ENCODE measurements at regions of chr5 and their contacts with region 1.

Region 1: DNA sequence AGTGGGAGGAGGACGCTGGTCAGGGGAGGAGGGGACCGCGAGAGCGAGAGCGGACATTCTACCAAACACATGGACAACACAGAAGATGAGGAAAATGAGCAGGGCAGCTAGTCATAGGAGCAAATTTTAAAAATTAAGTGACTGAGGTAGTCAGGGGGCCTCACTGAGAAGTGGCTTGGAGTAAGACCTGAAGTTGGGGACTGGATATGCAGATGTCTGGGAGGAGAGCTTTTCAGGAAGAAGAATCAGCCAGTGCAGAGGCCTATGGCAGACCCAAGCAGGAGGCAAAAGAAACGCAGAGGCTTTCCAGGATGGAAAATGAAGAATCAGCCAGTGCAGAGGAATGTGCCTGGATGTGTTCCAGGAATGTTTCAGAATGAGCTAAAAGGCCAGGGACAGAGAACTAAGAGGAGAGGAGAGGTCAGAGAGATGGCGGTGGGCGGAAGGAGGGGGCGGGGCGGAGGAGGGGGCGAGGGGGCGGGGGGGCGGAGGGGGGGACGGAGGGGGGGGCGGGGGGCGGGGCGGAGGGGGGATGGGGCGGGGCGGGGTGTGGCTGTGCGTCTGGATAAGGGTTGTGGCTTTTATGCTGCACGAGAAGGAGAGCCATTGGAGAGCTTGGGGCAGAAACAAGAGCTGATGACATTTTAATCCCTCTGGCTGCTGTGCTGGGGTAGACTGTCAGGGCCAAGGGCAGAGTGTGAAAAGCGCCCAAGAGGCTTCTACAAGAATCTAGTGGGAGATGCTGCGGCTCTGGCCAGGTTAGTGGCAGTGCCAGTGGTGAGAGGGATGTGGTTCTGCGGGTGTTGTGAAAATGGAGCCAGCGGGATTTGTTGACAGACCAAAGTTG is 129.6 kb downstream of the KCNIP1 start:
- DNase-seq: peak; percentile 83
- H3K4me3 ChIP-seq: peak overlapping the region; percentile 12 to 42
- H3K27ac ChIP-seq: peak overlapping the region; percentile 83 to 84
- H3K4me1 ChIP-seq: peaks cover 33% of the 10 kb centered on the region
- H3K27me3 ChIP-seq: no peaks in the 10 kb centered on the region
- CTCF ChIP-seq: no peak
- POLR2A ChIP-seq: no peak

Region 2: DNA sequence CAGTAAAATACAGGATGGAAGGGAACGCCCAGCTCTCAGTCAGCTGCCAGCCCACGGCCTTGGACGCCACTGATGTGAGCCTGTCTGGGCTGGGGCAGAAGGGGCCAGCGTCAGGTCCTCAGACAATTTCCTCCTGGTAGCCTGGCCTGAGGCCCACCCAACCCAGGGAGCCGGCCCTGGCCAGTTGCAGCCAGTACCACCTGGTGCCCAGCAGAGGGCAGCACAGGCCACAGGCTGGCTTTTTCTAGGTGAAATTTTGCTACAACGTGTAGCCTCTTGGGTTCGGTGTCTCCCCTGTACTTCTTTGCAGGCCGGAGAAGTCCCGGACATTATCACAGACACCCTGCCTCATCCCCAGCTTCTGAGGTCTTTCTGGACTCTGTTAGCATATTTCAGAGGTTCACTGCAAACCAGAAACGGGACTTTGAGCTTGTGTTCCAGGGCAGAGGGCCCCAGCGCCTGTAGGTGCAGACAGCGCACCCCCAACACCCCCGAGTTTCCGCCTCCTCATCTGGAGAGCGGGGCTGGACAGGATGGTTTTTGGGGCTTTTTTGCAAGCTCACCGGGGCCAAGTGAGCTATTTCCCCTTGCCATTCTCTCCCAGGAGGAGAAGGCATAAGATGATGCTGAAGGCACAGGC is 198.4 kb before region 1 on chr5:
- intact Hi-C with region 1: loop called (anchors 5 kb)
- DNase-seq: peak; percentile 73
- H3K4me3 ChIP-seq: no peak overlapping the region
- H3K27ac ChIP-seq: no peak overlapping the region
- H3K4me1 ChIP-seq: peaks cover 27% of the 10 kb centered on the region
- H3K27me3 ChIP-seq: no peaks in the 10 kb centered on the region
- CTCF ChIP-seq: peak; percentile 96 to 97 (median 97)
- POLR2A ChIP-seq: no peak

Region 3: GRCh38 chr5:170738840-170739239 is 105.4 kb after region 1 on chr5:
- intact Hi-C with region 1: no loop called
- DNase-seq: no peak
- H3K4me3 ChIP-seq: no peak overlapping the region
- H3K27ac ChIP-seq: no peak overlapping the region
- H3K4me1 ChIP-seq: peaks cover under 1% of the 10 kb centered on the region
- H3K27me3 ChIP-seq: no peaks in the 10 kb centered on the region
- CTCF ChIP-seq: no peak
- POLR2A ChIP-seq: no peak

Region 4: DNA sequence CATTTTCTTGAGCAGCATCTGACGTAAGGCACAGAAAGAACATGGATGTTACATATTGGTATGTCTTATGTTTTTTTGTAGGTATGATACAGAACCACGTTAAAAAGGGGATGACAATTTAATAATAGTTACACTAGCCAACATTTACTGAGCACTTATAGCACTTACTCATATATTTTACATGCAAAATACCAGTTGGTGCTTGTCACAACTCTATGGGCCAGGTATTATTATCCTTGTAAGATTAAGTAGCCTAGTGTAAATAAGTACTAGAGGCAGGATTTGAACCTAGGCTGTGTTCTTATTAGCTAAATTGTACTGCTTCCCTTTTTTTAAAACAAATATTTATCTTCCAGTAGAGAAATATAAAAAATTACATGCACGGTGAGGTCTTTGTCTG is 311.8 kb after region 1 on chr5:
- intact Hi-C with region 1: no loop called
- DNase-seq: no peak
- H3K4me3 ChIP-seq: no peak overlapping the region
- H3K27ac ChIP-seq: no peak overlapping the region
- H3K4me1 ChIP-seq: no peaks in the 10 kb centered on the region
- H3K27me3 ChIP-seq: no peaks in the 10 kb centered on the region
- CTCF ChIP-seq: no peak
- POLR2A ChIP-seq: no peak